Mammary epithelial cell (primary cell): ENCODE measurements at regions of chr1 and their contacts with region 1.

Region 1: DNA sequence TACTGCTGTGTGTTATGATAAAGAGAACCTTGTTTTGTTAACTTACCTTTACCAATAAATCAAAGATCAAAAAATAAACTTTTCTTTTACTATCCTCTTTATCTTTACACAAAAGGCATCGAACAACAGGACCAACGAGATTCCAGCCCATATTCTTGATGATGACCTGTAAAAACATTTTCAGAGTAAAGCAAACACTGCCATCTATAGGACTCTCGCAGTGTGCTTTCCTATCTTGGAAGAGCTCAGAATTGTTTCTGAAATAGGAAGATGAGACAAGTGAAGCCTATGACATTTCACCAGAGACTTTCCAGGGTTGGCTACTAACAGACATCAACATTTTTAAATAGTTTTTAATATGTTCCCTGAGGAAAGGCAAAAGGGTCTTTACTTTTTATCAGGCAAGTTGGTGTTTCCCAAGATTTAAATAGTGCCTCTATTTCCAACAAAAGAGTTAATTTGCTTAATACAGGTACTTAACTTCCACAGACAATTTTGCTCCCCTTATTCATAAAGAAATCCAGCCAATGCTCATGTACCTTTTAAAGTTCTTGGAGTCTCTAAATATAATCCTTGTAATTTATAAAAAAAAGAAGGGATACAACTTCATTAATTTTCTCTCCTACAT is 7.3 kb downstream of the GLMN start:
- DNase-seq: peak; percentile 49
- H3K4me3 ChIP-seq: no peak overlapping the region
- H3K27ac ChIP-seq: no peak overlapping the region
- H3K4me1 ChIP-seq: no peaks in the 10 kb centered on the region
- H3K27me3 ChIP-seq: no peaks in the 10 kb centered on the region
- CTCF ChIP-seq: peak; percentile 75 to 83

Region 2: DNA sequence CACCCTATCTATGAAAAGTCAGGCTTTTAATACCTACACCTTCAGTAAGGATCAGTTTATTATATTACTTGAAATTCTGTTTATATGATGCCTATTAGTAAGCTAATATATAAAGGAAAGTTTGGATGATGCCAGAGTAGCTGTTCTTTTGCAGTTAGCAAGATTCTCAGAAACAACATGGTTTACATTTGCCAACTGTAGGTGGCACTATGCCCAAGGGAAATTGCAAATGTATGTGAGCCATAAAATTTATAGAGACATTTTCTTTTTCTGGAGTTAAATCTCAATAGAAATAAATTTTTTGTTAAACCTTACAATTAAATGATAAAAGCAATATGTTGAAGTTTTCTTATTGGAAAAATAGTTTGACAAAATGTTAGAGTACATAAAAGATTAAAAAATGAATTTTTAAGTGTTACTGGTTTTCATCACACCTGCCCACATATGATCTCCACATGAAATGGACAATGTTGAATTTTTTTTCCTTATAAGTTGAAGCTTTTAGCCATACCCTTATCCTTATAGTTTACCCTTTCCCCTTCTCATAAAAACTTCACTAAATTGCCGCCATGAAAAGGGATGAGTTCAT is 293.8 kb before region 1 on chr1:
- CTCF ChIA-PET with region 1: interaction called, 5 read pairs
- dilution Hi-C with region 1: no loop called
- in situ Hi-C with region 1: loop called (anchors 10 kb)
- intact Hi-C with region 1: loop called (anchors 1 kb)
- DNase-seq: peak; percentile 40
- H3K4me3 ChIP-seq: no peak overlapping the region
- H3K27ac ChIP-seq: no peak overlapping the region
- H3K4me1 ChIP-seq: no peaks in the 10 kb centered on the region
- H3K27me3 ChIP-seq: no peaks in the 10 kb centered on the region
- CTCF ChIP-seq: peak; percentile 51 to 70

Region 3: GRCh38 chr1:92080128-92080985 is 211.1 kb before region 1 on chr1 and contains the start of gene BTBD8:
- CTCF ChIA-PET with region 1: no interaction called
- dilution Hi-C with region 1: no loop called
- in situ Hi-C with region 1: no loop called
- intact Hi-C with region 1: loop called (anchors 5 kb)
- DNase-seq: peak; percentile 74
- H3K4me3 ChIP-seq: peak within 1 kb of the TSS; percentile 82 to 88 (median 84)
- H3K27ac ChIP-seq: peak within 1 kb of the TSS; percentile 18
- H3K4me1 ChIP-seq: peaks cover 7% of the 10 kb centered on the region
- H3K27me3 ChIP-seq: no peaks in the 10 kb centered on the region
- CTCF ChIP-seq: no peak
- total RNA-seq, gene BTBD8: 2.3 to 4.8 TPM